Activated CD4-positive, alpha-beta memory T cell treated with anti-CD3 and anti-CD28 coated beads for 36 hours (primary cell): ENCODE measurements at regions of chr4 and their contacts with region 1.

Region 1: GRCh38 chr4:108570993-108571569 is 49.3 kb upstream of the RPL34 start:
- DNase-seq: no peak
- H3K4me3 Mint-ChIP-seq: no peak overlapping the region
- H3K27ac Mint-ChIP-seq: no peak overlapping the region
- H3K4me1 Mint-ChIP-seq: peaks cover 7% of the 10 kb centered on the region
- H3K27me3 Mint-ChIP-seq: no peaks in the 10 kb centered on the region

Region 2: GRCh38 chr4:107757864-107758476 is 813.1 kb before region 1 on chr4:
- CTCF ChIA-PET with region 1: interaction called, 5 read pairs
- POLR2A ChIA-PET with region 1: no interaction called
- intact Hi-C with region 1: loop called (anchors 5 kb)
- DNase-seq: no peak
- H3K4me3 Mint-ChIP-seq: no peak overlapping the region
- H3K27ac Mint-ChIP-seq: no peak overlapping the region
- H3K4me1 Mint-ChIP-seq: peaks cover 5% of the 10 kb centered on the region
- H3K27me3 Mint-ChIP-seq: peaks cover 5% of the 10 kb centered on the region

Region 3: GRCh38 chr4:108018040-108018883 is 552.8 kb before region 1 on chr4:
- CTCF ChIA-PET with region 1: interaction called, 141 read pairs
- POLR2A ChIA-PET with region 1: interaction called, 4 read pairs
- intact Hi-C with region 1: loop called (anchors 1 kb)
- DNase-seq: peak; percentile 88
- H3K4me3 Mint-ChIP-seq: no peak overlapping the region
- H3K27ac Mint-ChIP-seq: no peak overlapping the region
- H3K4me1 Mint-ChIP-seq: peaks cover 8% of the 10 kb centered on the region
- H3K27me3 Mint-ChIP-seq: no peaks in the 10 kb centered on the region

Region 4: DNA sequence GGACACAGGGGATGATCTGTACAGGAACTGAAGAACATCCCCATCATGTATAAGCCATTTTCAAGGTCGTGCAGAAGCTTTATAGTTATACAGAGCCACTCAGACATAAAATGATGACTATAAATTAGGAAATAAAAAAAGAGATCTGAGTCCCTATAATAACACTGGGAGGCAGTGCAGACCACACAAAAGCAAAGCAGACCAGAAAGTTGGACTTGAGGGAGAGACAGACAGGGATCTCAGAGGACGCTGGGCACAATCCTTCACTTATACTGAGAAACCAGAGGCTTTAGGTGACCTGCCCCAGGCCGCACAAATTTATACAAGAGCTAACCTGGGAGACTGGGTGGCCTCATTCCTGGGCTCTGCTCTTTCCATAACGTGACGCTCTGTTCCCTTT is 510.9 kb before region 1 on chr4:
- CTCF ChIA-PET with region 1: interaction called, 10 read pairs
- POLR2A ChIA-PET with region 1: no interaction called
- intact Hi-C with region 1: no loop called
- DNase-seq: no peak
- H3K4me3 Mint-ChIP-seq: no peak overlapping the region
- H3K27ac Mint-ChIP-seq: no peak overlapping the region
- H3K4me1 Mint-ChIP-seq: peaks cover 43% of the 10 kb centered on the region
- H3K27me3 Mint-ChIP-seq: no peaks in the 10 kb centered on the region

Region 5: DNA sequence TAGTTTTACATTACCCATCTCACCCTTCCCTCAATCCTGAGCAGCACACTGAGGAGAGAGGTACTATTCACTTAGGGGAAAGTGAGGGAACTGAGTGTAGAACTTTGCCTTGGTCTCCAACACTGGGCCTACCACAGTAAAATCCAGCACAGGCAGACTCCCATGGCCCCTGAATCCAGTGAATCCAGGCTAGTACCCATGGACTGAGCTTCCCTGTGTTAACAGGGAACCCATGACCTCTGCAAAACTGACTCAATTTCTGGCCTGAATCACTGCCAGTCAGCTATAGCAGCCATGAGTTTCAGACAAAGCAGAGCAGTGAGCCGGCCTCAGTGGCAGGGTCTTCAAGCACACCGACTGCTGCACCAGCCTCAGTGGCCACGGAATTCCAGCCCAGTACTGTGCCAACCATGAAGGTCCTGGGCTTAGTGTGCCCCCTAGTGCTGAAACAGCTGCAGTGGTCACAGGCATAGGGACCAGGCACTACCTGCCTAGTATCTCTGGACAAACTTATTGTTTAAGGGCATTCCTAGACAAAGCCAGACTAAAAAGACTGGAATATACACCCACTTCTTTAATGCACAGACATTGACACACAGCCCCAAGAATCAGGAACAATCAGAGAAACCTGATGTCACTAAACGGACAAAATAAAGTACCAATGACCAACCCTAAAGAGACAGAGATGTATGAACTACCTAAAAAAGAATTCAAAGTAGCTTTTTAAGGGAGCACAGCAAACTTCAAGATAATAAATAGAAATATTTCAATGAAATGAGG is 78.1 kb before region 1 on chr4:
- CTCF ChIA-PET with region 1: interaction called, 10 read pairs
- POLR2A ChIA-PET with region 1: no interaction called
- intact Hi-C with region 1: no loop called
- DNase-seq: peak; percentile 53
- H3K4me3 Mint-ChIP-seq: no peak overlapping the region
- H3K27ac Mint-ChIP-seq: no peak overlapping the region
- H3K4me1 Mint-ChIP-seq: no peaks in the 10 kb centered on the region
- H3K27me3 Mint-ChIP-seq: no peaks in the 10 kb centered on the region

Region 6: DNA sequence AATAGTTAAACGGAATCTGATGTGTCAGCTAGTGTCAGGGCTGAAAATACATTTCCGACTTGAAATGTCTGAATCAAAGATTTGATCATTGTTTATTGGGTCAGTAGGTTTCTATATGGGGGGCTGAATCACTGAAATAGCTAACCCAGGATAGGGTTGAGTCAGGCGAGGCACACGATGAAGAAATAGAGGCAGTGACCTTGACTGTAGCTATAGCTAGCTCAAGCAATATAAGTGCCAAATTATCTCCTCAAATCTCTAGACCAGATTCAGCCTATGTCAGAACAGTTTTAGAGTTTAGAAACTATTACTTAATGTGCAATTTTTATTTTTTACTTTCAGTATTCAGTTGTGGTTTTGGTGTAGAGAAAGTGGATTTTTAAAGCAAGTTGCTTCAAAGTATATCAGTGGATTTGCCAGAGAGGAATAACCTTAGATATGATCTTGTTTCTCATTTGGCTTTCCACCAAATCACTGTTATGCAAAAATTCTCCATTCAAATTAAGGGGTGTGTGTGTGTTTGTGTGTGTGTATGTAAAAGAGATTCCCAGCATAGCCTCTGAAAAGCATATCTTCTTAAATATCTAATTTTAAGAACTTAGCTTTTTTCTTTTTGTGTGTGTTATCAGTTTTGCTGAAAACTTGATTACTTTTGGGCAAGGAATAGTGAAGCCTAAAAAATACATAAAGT is 51.0 kb before region 1 on chr4:
- CTCF ChIA-PET with region 1: interaction called, 10 read pairs
- POLR2A ChIA-PET with region 1: no interaction called
- intact Hi-C with region 1: no loop called
- DNase-seq: no peak
- H3K4me3 Mint-ChIP-seq: no peak overlapping the region
- H3K27ac Mint-ChIP-seq: no peak overlapping the region
- H3K4me1 Mint-ChIP-seq: peaks cover 12% of the 10 kb centered on the region
- H3K27me3 Mint-ChIP-seq: no peaks in the 10 kb centered on the region

Region 7: DNA sequence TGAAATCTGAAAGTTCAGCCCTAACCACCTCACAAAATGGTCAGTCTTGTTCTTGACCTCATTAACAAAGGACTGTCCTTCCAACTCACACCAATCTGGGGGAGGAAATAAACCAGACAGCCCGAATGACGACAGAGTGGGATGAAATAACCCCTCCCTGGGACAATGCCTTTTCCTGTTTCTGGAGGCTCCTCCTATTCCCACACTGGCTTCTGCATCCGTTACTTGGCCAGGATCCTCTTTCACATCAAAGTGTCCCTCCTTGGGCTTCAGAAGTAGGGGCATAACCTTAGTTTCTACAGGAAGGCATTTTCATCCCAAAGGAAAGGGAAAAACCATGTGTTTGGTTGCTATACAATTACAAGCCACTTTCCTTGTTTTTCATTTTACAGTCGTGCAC is 10.5 kb before region 1 on chr4:
- CTCF ChIA-PET with region 1: interaction called, 12 read pairs
- POLR2A ChIA-PET with region 1: no interaction called
- intact Hi-C with region 1: no loop called
- DNase-seq: no peak
- H3K4me3 Mint-ChIP-seq: no peak overlapping the region
- H3K27ac Mint-ChIP-seq: no peak overlapping the region
- H3K4me1 Mint-ChIP-seq: no peaks in the 10 kb centered on the region
- H3K27me3 Mint-ChIP-seq: no peaks in the 10 kb centered on the region